ENCODE measurements at regions of chr11 and their contacts with region 1.

Region 1: GRCh38 chr11:100808904-100809491 is 121.9 kb downstream of the ARHGAP42 start:
- DNase-seq: peak; percentile 32 to 53
- H3K4me3 ChIP-seq: no peak overlapping the region
- H3K4me3 Mint-ChIP-seq: no peak overlapping the region
- H3K27ac Mint-ChIP-seq: peak overlapping the region; percentile 45
- H3K4me1 ChIP-seq: peaks cover 35% of the 10 kb centered on the region
- H3K4me1 Mint-ChIP-seq: peaks cover 21% of the 10 kb centered on the region
- H3K27me3 ChIP-seq: no peaks in the 10 kb centered on the region
- H3K27me3 Mint-ChIP-seq: no peaks in the 10 kb centered on the region
- CTCF ChIP-seq: no peak

Region 2: GRCh38 chr11:100753172-100753543 is 55.8 kb before region 1 on chr11:
- CTCF ChIA-PET with region 1: no interaction called
- POLR2A ChIA-PET with region 1: no interaction called
- intact Hi-C with region 1: loop called (anchors 1 kb)
- DNase-seq: peak; percentile 85 to 89
- H3K4me3 ChIP-seq: no peak overlapping the region
- H3K4me3 Mint-ChIP-seq: no peak overlapping the region
- H3K27ac Mint-ChIP-seq: peak overlapping the region; percentile 81
- H3K4me1 ChIP-seq: peaks cover 33% of the 10 kb centered on the region
- H3K4me1 Mint-ChIP-seq: peaks cover 16% of the 10 kb centered on the region
- H3K27me3 ChIP-seq: no peaks in the 10 kb centered on the region
- H3K27me3 Mint-ChIP-seq: no peaks in the 10 kb centered on the region
- CTCF ChIP-seq: peak in 1 of 2 experiments; percentile 35

Region 3: GRCh38 chr11:100791860-100792259 is 17.1 kb before region 1 on chr11:
- CTCF ChIA-PET with region 1: no interaction called
- POLR2A ChIA-PET with region 1: no interaction called
- intact Hi-C with region 1: loop called (anchors 2 kb)
- DNase-seq: no peak
- H3K4me3 ChIP-seq: no peak overlapping the region
- H3K4me3 Mint-ChIP-seq: no peak overlapping the region
- H3K27ac Mint-ChIP-seq: no peak overlapping the region
- H3K4me1 ChIP-seq: no peaks in the 10 kb centered on the region
- H3K4me1 Mint-ChIP-seq: peaks cover 10% of the 10 kb centered on the region
- H3K27me3 ChIP-seq: no peaks in the 10 kb centered on the region
- H3K27me3 Mint-ChIP-seq: no peaks in the 10 kb centered on the region
- CTCF ChIP-seq: no peak

Region 4: DNA sequence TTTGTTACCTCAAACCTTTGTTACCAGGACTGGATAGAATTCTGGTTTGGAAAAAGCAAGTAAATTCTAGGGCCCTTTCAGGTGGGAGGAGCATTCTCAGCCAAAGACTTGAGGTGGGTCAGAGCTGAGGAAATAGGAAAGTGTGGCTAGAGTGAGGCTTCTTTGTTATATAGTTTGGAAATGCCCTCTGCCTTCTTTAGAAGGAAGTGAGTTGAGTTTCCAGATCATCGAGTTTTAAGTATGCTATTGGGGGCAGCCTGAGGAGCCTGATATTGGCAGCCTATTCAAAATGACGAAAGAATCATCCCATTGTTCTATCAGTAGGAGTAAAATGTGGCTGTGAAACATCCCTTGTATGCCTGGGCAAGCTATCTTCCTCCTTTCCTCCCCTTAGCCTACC is 12.2 kb after region 1 on chr11:
- CTCF ChIA-PET with region 1: no interaction called
- POLR2A ChIA-PET with region 1: no interaction called
- intact Hi-C with region 1: loop called (anchors 1 kb)
- DNase-seq: no peak
- H3K4me3 ChIP-seq: no peak overlapping the region
- H3K4me3 Mint-ChIP-seq: no peak overlapping the region
- H3K27ac Mint-ChIP-seq: no peak overlapping the region
- H3K4me1 ChIP-seq: no peaks in the 10 kb centered on the region
- H3K4me1 Mint-ChIP-seq: no peaks in the 10 kb centered on the region
- H3K27me3 ChIP-seq: no peaks in the 10 kb centered on the region
- H3K27me3 Mint-ChIP-seq: no peaks in the 10 kb centered on the region
- CTCF ChIP-seq: no peak

Measured in Caco-2 (cell line).